ENCODE measurements at regions of chr9 and their contacts with region 1.

Region 1: GRCh38 chr9:90301277-90301653 is 341.4 kb downstream of the DIRAS2 start:
- DNase-seq: peak; percentile 86
- H3K4me3 ChIP-seq: no peak overlapping the region
- H3K27ac ChIP-seq: no peak overlapping the region
- H3K4me1 ChIP-seq: peaks cover 6% of the 10 kb centered on the region
- H3K27me3 ChIP-seq: no peaks in the 10 kb centered on the region
- CTCF ChIP-seq: no peak

Region 2: DNA sequence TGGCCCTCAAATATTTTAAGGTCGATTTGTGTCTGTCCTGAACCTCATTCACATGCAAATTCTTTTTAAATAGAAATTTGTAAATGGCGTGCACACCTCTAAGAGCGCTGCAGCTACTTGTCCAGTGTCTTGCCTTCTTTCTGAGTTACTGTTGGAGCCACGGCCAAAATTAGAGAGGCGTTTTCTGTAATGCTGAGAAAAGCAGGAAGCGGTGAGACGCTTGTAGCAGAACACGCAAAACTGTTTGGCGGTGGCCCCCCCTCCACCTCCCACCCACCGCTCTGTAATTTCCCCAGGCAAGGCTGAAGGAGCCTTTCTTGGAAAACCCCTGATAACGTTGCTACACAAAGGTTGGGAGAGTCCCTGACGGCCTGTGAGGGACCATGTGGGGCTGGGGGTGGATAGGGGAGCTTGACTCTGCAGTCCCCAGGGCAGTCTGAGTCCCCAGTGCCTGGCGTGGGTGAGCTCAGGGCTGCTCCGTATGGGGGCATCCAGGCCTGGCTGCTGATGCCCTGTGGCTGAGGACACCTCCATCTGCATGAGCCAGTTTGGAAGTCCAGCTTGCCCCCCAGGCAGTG is 600.0 kb before region 1 on chr9:
- CTCF ChIA-PET with region 1: no interaction called
- dilution Hi-C with region 1: no loop called
- in situ Hi-C with region 1: no loop called
- intact Hi-C with region 1: no loop called
- DNase-seq: no peak
- H3K4me3 ChIP-seq: no peak overlapping the region
- H3K27ac ChIP-seq: no peak overlapping the region
- H3K4me1 ChIP-seq: no peaks in the 10 kb centered on the region
- H3K27me3 ChIP-seq: peaks cover 5% of the 10 kb centered on the region
- CTCF ChIP-seq: no peak

Region 3: GRCh38 chr9:90261698-90262097 is 39.6 kb before region 1 on chr9:
- CTCF ChIA-PET with region 1: no interaction called
- dilution Hi-C with region 1: no loop called
- in situ Hi-C with region 1: no loop called
- intact Hi-C with region 1: no loop called
- DNase-seq: peak; percentile 15
- H3K4me3 ChIP-seq: no peak overlapping the region
- H3K27ac ChIP-seq: no peak overlapping the region
- H3K4me1 ChIP-seq: no peaks in the 10 kb centered on the region
- H3K27me3 ChIP-seq: no peaks in the 10 kb centered on the region
- CTCF ChIP-seq: no peak

Region 4: GRCh38 chr9:90343991-90344390 is 42.7 kb after region 1 on chr9:
- CTCF ChIA-PET with region 1: no interaction called
- dilution Hi-C with region 1: no loop called
- in situ Hi-C with region 1: no loop called
- intact Hi-C with region 1: loop called (anchors 1 kb)
- DNase-seq: peak; percentile 88
- H3K4me3 ChIP-seq: no peak overlapping the region
- H3K27ac ChIP-seq: peak overlapping the region; percentile 72
- H3K4me1 ChIP-seq: peaks cover 19% of the 10 kb centered on the region
- H3K27me3 ChIP-seq: no peaks in the 10 kb centered on the region
- CTCF ChIP-seq: no peak